ENCODE measurements at regions of chr6 and their contacts with region 1.

Region 1: GRCh38 chr6:33276864-33277662 is at the start of gene B3GALT4:
- DNase-seq: peak; percentile 86
- ATAC-seq: peak; percentile 76
- H3K4me3 Mint-ChIP-seq: peak within 1 kb of the TSS; percentile 97
- H3K27ac Mint-ChIP-seq: peak within 1 kb of the TSS; percentile 98
- H3K4me1 Mint-ChIP-seq: peaks cover 46% of the 10 kb centered on the region
- H3K27me3 Mint-ChIP-seq: no peaks in the 10 kb centered on the region
- total RNA-seq, gene B3GALT4: 32.0 to 35.4 TPM

Region 2: DNA sequence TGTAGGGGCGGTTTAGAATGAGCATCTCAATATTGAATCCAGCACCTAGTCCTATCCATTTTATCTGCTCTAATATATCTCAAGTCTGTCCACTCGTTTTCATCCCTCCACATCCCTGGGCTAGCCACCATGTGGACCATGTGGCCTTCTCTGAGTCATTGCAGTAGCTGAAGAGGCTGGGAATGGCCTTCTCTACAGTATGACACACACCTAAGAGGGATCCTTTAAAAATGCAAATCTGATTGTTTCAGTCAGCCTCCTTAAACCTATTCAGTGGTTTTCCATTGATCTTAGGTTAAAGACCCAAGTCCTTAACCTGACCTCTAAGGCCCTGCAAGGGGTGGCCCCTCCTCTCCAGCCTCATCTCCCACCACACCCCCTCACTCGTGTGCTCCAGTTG is 59.4 kb before region 1 on chr6:
- POLR2A ChIA-PET with region 1: no interaction called
- DNase-seq: no peak
- ATAC-seq: no peak
- H3K4me3 Mint-ChIP-seq: no peak overlapping the region
- H3K27ac Mint-ChIP-seq: no peak overlapping the region
- H3K4me1 Mint-ChIP-seq: peaks cover 26% of the 10 kb centered on the region
- H3K27me3 Mint-ChIP-seq: peaks cover 28% of the 10 kb centered on the region

Region 3: DNA sequence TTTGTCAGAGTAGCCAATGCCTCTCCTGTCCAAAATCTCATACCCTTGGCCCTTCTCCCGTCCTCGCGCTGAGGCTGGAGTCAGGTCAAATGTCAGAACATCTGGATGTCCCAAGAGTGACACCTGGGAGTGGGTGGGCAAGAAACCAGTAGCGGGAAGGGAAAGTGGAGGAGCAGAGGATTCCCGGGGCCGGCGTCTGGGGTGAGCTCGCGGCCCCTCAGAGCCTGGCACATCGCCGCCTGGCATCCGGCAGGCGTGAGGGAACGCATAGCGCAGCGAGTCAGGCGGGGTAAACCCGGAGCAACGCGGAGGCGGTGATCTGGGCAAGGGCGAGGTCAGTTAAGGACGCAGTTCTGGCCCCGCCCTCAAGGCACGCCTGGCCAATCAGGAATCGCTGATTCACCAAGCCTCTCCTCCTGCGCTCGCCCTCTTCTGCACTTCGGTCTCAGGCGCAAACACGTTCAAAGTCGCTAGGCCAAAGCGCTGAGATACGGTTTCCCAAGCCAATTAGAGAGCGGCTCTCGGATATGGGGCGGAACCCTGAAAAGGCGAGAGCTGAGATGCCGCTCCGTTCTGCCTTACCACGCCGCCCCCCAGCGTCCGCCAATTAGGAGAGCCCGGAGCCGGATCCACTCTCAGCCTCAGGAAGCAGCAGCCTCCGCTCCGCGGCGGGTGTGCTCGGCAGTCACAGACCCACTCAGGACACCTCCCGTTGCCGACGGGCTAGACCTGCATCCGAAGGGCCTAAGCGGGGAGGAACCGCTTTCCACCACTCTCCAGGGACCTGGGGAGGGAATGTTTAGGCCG is 27.9 kb before region 1 on chr6:
- POLR2A ChIA-PET with region 1: interaction called, 39 read pairs
- DNase-seq: peak; percentile 92
- ATAC-seq: peak; percentile 94
- H3K4me3 Mint-ChIP-seq: peak overlapping the region; percentile 87
- H3K27ac Mint-ChIP-seq: peak overlapping the region; percentile 91
- H3K4me1 Mint-ChIP-seq: peaks cover 26% of the 10 kb centered on the region
- H3K27me3 Mint-ChIP-seq: peaks cover 6% of the 10 kb centered on the region

Region 4: GRCh38 chr6:33288921-33289748 is 12.1 kb after region 1 on chr6 and contains the starts of genes PFDN6 and WDR46:
- POLR2A ChIA-PET with region 1: interaction called, 107 read pairs
- DNase-seq: peak; percentile 74
- ATAC-seq: peak; percentile 97
- H3K4me3 Mint-ChIP-seq: peak within 1 kb of the TSS; percentile 96
- H3K27ac Mint-ChIP-seq: peak within 1 kb of the TSS; percentile 90
- H3K4me1 Mint-ChIP-seq: peaks cover 31% of the 10 kb centered on the region
- H3K27me3 Mint-ChIP-seq: no peaks in the 10 kb centered on the region
- total RNA-seq, gene PFDN6: 53.3 to 54.7 TPM
- total RNA-seq, gene WDR46: 50.0 to 58.0 TPM

Region 5: GRCh38 chr6:33344701-33345697 is 67.9 kb after region 1 on chr6:
- POLR2A ChIA-PET with region 1: interaction called, 23 read pairs
- DNase-seq: peak; percentile 61
- ATAC-seq: peak; percentile 68
- H3K4me3 Mint-ChIP-seq: peak overlapping the region; percentile 74
- H3K27ac Mint-ChIP-seq: peak overlapping the region; percentile 87
- H3K4me1 Mint-ChIP-seq: peaks cover 28% of the 10 kb centered on the region
- H3K27me3 Mint-ChIP-seq: no peaks in the 10 kb centered on the region